ENCODE measurements at regions of chr5 and their contacts with region 1.

Region 1: GRCh38 chr5:137751869-137752491 is 2.2 kb downstream of the HNRNPA0 start:
- DNase-seq: no peak
- H3K4me3 ChIP-seq: peak overlapping the region; percentile 94
- H3K27ac ChIP-seq: no peak overlapping the region
- H3K27me3 ChIP-seq: no peaks in the 10 kb centered on the region
- CTCF ChIP-seq: peak; percentile 84

Region 2: GRCh38 chr5:136666970-136667620 is 1084.9 kb before region 1 on chr5:
- CTCF ChIA-PET with region 1: no interaction called
- POLR2A ChIA-PET with region 1: no interaction called
- DNase-seq: no peak
- H3K4me3 ChIP-seq: no peak overlapping the region
- H3K27ac ChIP-seq: no peak overlapping the region
- H3K27me3 ChIP-seq: no peaks in the 10 kb centered on the region
- CTCF ChIP-seq: no peak

Region 3: GRCh38 chr5:137735555-137736284 is 16.3 kb before region 1 on chr5 and contains the start of gene KLHL3:
- CTCF ChIA-PET with region 1: interaction called, 37 read pairs
- POLR2A ChIA-PET with region 1: interaction called, 3 read pairs
- DNase-seq: no peak
- H3K4me3 ChIP-seq: peak within 1 kb of the TSS; percentile 66
- H3K27ac ChIP-seq: peak within 1 kb of the TSS; percentile 63
- H3K27me3 ChIP-seq: no peaks in the 10 kb centered on the region
- CTCF ChIP-seq: peak; percentile 24; the same call in 1 of the 2 replicates
- polyA plus RNA-seq, gene KLHL3: 2.1 and 2.2 TPM in 2 replicates

Region 4: GRCh38 chr5:138065102-138065501 is 313.1 kb after region 1 on chr5:
- CTCF ChIA-PET with region 1: no interaction called
- POLR2A ChIA-PET with region 1: no interaction called
- DNase-seq: no peak
- H3K4me3 ChIP-seq: no peak overlapping the region
- H3K27ac ChIP-seq: no peak overlapping the region
- H3K27me3 ChIP-seq: peaks cover 4% of the 10 kb centered on the region
- CTCF ChIP-seq: peak; percentile 33

Measured in AG04450 (cell line).